PC-9 (cell line): ENCODE measurements at regions of chr12 and their contacts with region 1.

Region 1: GRCh38 chr12:101876861-101877815 is at the start of gene DRAM1:
- DNase-seq: peak; percentile 67 to 90
- H3K4me3 ChIP-seq: peak within 1 kb of the TSS; percentile 79
- H3K27ac ChIP-seq: peak within 1 kb of the TSS; percentile 72
- H3K4me1 ChIP-seq: peaks cover 6% of the 10 kb centered on the region; the same call in 1 of the 2 replicates
- H3K27me3 ChIP-seq: no peaks in the 10 kb centered on the region
- CTCF ChIP-seq: no peak
- total RNA-seq, gene DRAM1: 6.0 and 6.2 TPM in 2 replicates

Region 2: GRCh38 chr12:101582937-101583336 is 294.2 kb before region 1 on chr12:
- CTCF ChIA-PET with region 1: interaction called, 10 read pairs
- POLR2A ChIA-PET with region 1: no interaction called
- intact Hi-C with region 1: no loop called
- DNase-seq: no peak
- H3K4me3 ChIP-seq: no peak overlapping the region
- H3K27ac ChIP-seq: no peak overlapping the region
- H3K4me1 ChIP-seq: no peaks in the 10 kb centered on the region
- H3K27me3 ChIP-seq: no peaks in the 10 kb centered on the region
- CTCF ChIP-seq: no peak

Region 3: DNA sequence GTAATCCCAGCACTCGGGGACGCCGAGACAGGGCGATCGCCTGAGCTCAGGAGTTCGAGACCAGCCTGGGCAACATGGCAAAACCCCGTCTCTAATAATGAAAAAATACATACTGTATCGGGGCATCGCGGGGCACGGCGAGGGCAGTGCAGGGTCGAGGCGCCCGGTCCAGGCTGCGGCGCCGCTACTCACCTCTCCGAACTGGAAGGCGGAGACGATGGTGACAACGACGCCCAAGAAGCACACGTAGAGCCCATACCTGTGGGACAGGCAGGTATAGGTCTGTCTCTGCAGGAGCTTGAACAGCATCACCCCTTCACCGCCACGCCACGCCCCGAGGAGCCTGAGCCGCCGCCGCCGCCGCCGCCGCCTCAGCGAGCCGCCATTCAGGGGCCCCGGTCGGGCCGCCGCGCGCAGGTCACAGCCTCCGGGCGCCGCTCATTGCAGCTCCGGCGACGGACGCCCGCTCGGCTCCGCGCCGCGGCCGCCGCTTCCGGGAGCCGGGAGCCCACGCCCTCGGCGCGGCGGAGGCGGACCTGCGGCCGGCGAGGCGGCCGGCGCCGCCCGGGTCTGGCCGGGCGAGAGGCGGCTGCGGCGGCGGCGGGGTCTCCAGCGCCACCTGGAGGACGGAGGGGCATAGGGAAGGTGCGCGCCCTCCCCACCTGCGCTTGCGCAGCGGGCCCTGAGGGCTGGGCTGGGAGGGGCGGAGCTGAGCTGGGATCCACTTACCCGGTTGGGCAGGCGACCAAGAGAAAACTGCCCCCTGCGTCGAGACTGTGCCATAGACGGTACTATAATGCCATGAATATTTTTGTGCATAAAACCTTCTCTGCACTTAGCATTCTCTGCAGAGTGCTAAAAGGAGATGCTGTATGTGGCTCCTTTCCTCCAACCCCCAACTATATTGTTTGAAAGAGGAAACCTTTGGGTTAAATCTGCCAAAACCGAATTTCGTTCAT is 46.5 kb before region 1 on chr12 and contains the start of gene GNPTAB:
- CTCF ChIA-PET with region 1: no interaction called
- POLR2A ChIA-PET with region 1: no interaction called
- intact Hi-C with region 1: loop called (anchors 5 kb)
- DNase-seq: peak; percentile 73 to 95
- H3K4me3 ChIP-seq: peak within 1 kb of the TSS; percentile 90
- H3K27ac ChIP-seq: no peak within 1 kb of the TSS
- H3K4me1 ChIP-seq: peaks cover 8% of the 10 kb centered on the region; the same call in 1 of the 2 replicates
- H3K27me3 ChIP-seq: no peaks in the 10 kb centered on the region
- CTCF ChIP-seq: peak; percentile 70
- total RNA-seq, gene GNPTAB: 22.0 and 26.5 TPM in 2 replicates

Region 4: GRCh38 chr12:101891462-101892273 is 14.5 kb after region 1 on chr12:
- CTCF ChIA-PET with region 1: no interaction called
- POLR2A ChIA-PET with region 1: interaction called, 6 read pairs
- intact Hi-C with region 1: loop called (anchors 2 kb)
- DNase-seq: peak; percentile 10 to 61
- H3K4me3 ChIP-seq: 0 out of 2 replicates have a peak overlapping the region, but pooled peaks have one; percentile 6
- H3K27ac ChIP-seq: peak overlapping the region; percentile 67
- H3K4me1 ChIP-seq: peaks cover 42% of the 10 kb centered on the region
- H3K27me3 ChIP-seq: no peaks in the 10 kb centered on the region
- CTCF ChIP-seq: no peak

Region 5: DNA sequence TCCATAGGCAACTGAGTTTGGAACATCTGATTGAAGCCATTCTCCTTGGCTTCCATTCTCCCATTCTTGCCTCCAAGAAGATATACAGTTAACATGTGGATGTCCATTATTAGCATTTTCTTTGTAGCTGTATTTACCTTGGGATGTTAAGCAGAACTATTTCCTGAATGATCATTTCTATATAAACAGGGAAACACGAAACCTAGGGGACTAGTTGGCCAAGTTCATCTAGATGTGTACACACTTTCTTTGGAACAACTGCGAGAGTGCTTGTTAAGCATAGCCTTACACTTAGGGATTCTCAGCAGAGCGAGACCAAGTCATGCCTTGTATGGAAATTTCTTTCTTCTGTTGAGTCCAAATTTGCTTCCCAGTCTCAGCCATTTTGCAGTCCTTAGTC is 42.3 kb after region 1 on chr12:
- CTCF ChIA-PET with region 1: no interaction called
- POLR2A ChIA-PET with region 1: no interaction called
- intact Hi-C with region 1: no loop called
- DNase-seq: no peak
- H3K4me3 ChIP-seq: no peak overlapping the region
- H3K27ac ChIP-seq: no peak overlapping the region
- H3K4me1 ChIP-seq: no peaks in the 10 kb centered on the region
- H3K27me3 ChIP-seq: no peaks in the 10 kb centered on the region
- CTCF ChIP-seq: no peak

Region 6: DNA sequence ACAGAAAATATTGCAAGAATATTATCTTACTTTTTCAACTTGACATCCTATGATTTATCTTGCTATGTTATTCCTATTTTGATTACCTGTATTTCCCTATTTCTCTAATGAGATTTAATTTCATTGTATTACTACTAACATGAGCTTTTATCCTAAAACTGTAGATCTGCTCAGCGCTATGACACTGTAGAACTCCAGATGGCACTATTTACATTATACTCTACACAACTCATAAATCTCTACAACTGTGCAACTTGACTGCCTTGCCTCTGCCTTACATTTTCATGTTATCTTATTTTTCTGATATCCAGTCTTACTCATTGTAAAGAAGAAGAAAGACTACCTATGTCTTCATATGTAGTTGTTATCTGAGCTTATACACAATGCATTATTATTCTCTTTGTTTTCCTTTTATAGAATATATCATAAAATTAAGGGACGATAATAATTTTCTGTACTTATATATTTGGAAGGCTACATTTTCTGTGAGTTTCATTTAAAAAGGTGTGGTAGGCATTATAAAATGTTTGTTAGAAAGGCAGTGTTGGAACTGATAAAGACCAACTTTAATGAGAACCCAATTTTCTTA is 218.6 kb after region 1 on chr12:
- CTCF ChIA-PET with region 1: no interaction called
- POLR2A ChIA-PET with region 1: no interaction called
- intact Hi-C with region 1: no loop called
- DNase-seq: peak in 1 of 2 experiments; percentile 41
- H3K4me3 ChIP-seq: no peak overlapping the region
- H3K27ac ChIP-seq: no peak overlapping the region
- H3K4me1 ChIP-seq: no peaks in the 10 kb centered on the region
- H3K27me3 ChIP-seq: no peaks in the 10 kb centered on the region
- CTCF ChIP-seq: peak; percentile 65

Region 7: GRCh38 chr12:102182635-102183034 is 305.5 kb after region 1 on chr12:
- CTCF ChIA-PET with region 1: no interaction called
- POLR2A ChIA-PET with region 1: no interaction called
- intact Hi-C with region 1: no loop called
- DNase-seq: no peak
- H3K4me3 ChIP-seq: no peak overlapping the region
- H3K27ac ChIP-seq: no peak overlapping the region
- H3K4me1 ChIP-seq: no peaks in the 10 kb centered on the region
- H3K27me3 ChIP-seq: no peaks in the 10 kb centered on the region
- CTCF ChIP-seq: no peak